ENCODE measurements at regions of chr1 and their contacts with region 1.

Region 1: GRCh38 chr1:150083907-150084306 is 16.3 kb downstream of the VPS45 start:
- DNase-seq: no peak
- H3K4me3 ChIP-seq: no peak overlapping the region
- CTCF ChIP-seq: no peak

Region 2: DNA sequence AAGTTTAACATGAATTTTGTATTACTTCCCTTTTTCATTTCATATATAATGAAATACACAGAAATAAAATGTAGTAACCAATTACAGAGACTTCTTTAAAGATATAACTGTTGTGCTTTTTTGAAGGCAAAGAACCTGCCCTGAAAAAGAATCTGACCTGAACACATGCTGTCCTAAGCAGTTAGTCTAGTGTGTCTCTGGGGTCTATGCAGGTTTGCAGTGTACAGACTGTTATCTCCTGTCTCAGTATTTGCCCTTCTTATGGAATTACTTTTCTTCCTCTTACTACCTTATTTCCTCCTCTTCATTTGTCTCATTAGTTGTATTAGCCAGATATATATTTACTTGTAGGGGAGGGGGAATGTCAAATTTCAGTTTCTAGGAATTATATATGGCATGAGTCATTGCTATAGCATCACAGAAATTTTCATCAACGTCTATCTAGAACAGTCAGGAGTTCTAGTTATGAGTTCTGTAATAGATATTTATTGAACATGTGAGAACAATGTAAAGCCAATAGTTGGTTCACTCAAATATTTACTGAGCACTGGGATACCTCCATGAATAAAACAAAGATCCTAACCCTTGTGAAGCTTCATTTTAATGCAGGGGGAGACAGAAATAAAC is 37.4 kb after region 1 on chr1:
- in situ Hi-C with region 1: loop called (anchors 5 kb)
- DNase-seq: no peak
- H3K4me3 ChIP-seq: no peak overlapping the region
- CTCF ChIP-seq: no peak

Region 3: DNA sequence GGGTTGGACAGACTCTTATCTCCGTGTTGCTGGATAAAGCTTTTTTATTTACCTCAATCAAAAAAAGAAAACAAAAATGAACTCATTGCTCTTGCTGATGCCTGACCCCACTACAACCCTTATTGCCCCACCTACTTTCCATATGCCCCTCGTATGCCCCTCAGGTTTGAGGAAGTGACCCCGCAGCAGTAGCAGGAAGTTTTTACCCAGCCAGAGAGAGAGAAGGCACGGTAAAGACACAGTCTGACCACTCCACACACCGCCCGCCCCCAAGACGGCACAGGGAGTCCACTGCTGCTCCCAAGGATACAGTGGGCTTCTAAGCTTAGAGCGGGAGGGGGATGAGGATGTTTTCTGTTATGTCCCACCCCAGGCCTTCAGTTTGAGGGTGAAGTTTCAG is 75.6 kb after region 1 on chr1:
- in situ Hi-C with region 1: loop called (anchors 5 kb)
- DNase-seq: no peak
- H3K4me3 ChIP-seq: no peak overlapping the region
- CTCF ChIP-seq: no peak

Measured in astrocyte of the cerebellum (primary cell).